ENCODE measurements at regions of chr6 and their contacts with region 1.

Region 1: DNA sequence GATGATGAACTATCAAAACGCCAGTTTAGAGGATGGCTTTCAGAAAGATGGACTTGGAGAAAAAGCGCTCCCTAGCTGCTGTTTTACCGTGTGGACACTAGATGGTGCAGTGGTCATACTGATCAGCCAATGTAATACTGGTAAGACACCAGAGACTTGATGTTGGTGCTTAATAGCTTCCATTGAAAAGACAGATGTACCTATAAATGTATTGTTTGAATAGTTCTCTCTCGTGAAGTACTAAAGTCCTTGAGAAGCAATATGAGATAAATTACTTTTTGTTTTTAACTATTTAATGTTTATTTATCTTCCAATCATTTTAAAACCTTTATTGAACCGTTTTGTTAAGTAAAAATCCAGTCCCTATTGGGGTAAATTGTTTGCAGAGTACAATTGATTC is 63.9 kb upstream of the FUCA2 start:
- DNase-seq: peak; percentile 51
- H3K4me3 Mint-ChIP-seq: no peak overlapping the region
- H3K27ac Mint-ChIP-seq: no peak overlapping the region
- H3K4me1 Mint-ChIP-seq: no peaks in the 10 kb centered on the region
- H3K27me3 Mint-ChIP-seq: no peaks in the 10 kb centered on the region
- CTCF ChIP-seq: peak; percentile 36

Region 2: DNA sequence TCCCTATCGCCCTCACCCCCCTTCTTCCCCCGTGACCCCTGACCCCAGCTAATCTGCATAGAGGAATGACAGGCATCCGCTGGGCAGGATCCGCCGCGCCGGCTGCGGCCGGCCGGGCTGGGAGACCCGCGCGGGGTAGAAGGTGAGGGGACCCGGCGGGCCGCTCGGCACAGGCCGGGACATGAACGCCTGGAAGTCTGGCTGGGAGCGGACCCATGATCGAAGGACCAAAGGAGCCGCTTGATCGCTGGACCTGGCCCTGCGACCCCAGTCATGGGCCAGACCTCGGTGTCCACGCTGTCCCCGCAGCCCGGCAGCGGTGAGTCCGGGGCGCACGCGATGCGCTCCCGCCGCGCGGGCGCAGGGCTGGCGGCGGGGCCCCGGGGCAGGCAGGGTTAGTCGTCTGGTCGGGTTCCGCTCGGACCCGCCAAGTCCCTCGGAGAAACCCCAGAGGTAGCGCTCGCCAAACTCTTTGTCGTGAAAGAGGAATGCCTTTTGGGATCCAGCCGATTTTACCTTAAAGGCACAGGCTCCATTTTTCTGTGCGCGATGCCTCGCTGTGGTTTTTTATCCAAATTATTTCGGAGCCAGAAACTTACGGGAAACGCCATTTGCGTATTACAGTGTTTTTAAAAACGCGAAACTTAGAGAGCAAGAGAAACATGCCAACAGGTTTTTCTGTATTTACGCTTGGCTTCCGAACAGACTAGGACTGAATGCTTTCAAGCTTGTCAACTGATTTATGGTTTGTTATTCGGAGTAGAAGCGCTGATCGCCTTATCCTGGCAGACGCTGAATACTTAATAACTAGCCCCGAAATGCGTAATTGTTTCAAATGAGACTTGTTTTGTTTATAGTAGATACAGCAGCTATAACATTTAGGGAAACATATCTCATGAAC is 102.7 kb after region 1 on chr6 and contains the start of gene PHACTR2:
- CTCF ChIA-PET with region 1: no interaction called
- intact Hi-C with region 1: loop called (anchors 5 kb)
- DNase-seq: peak; percentile 58
- H3K4me3 Mint-ChIP-seq: peak within 1 kb of the TSS; percentile 76
- H3K27ac Mint-ChIP-seq: peak within 1 kb of the TSS; percentile 75
- H3K4me1 Mint-ChIP-seq: peaks cover 28% of the 10 kb centered on the region
- H3K27me3 Mint-ChIP-seq: no peaks in the 10 kb centered on the region
- CTCF ChIP-seq: no peak
- total RNA-seq, gene PHACTR2: 19.5 and 20.7 TPM in 2 replicates

Region 3: DNA sequence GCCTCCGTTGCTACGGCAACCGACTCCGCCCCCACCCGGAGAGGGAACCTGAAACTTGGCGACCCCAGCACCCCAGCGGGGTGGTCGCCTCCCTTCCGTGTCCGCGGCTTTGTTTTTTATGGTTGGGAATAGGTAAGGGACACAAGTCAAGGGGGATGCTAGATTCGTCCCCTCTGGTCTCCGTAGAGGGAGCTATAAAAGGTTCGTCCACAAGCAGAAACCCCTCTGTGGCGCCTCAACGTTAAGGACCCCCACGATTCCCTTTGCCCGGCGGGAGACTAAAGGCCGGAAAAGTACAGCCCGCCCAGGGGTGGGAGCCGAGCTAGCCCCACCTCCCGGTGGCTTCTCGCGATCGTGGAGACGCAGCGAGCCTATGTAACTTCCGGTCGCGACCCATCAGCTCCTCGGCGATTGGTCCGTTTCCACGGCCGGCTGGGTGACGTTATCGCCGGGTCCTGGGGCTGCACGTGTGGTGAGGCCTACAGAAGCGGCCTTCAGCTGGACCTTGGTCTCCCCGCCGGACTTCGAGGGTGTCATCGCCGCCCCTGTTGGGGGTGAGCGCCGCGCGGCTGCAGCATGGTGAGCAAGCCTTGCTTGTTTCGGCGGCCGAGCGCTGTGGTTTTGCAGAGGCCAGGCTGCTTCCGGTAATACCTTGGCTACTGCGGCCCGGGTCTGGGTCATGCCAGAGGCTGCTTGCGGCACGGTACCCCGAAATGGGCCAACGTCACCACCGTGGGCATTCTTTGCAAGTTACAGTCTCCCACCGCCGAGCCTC is 267.6 kb after region 1 on chr6 and contains the start of gene LTV1:
- CTCF ChIA-PET with region 1: interaction called, 8 read pairs
- intact Hi-C with region 1: loop called (anchors 10 kb)
- DNase-seq: peak; percentile 92
- H3K4me3 Mint-ChIP-seq: peak within 1 kb of the TSS; percentile 82
- H3K27ac Mint-ChIP-seq: peak within 1 kb of the TSS; percentile 66
- H3K4me1 Mint-ChIP-seq: no peaks in the 10 kb centered on the region
- H3K27me3 Mint-ChIP-seq: no peaks in the 10 kb centered on the region
- CTCF ChIP-seq: no peak
- total RNA-seq, gene LTV1: 21.7 and 21.8 TPM in 2 replicates

Region 4: DNA sequence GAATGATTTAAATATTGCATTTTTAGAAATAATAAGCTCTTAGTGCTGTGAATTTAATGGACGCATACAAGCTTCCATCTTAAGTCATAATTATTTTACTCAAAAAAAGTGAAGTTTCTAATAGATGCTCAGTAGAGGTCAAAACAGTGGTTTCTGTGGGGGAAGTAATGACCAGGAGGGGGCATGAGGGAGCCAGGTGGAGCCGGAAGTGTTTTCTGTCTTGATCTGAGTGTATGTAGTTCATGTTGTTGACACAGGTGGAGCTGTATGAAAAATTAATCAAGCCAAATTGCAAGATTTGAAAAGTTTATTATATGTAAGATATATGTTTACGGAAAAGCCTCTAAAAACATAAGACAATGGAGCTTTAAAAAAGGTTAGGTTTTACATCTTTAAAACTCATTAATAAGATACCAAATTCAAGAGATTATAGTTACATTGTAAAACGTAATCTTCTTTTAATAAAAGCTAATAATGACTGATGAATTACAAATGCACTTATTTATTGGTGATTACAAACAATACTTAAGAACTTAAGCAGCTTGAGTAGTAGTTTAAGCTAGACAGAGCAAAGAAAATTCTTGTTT is 364.7 kb after region 1 on chr6:
- CTCF ChIA-PET with region 1: interaction called, 12 read pairs
- intact Hi-C with region 1: no loop called
- DNase-seq: peak; percentile 64
- H3K4me3 Mint-ChIP-seq: no peak overlapping the region
- H3K27ac Mint-ChIP-seq: no peak overlapping the region
- H3K4me1 Mint-ChIP-seq: no peaks in the 10 kb centered on the region
- H3K27me3 Mint-ChIP-seq: no peaks in the 10 kb centered on the region
- CTCF ChIP-seq: peak; percentile 31

Region 5: GRCh38 chr6:144013486-144013909 is 438.1 kb after region 1 on chr6:
- CTCF ChIA-PET with region 1: interaction called, 12 read pairs
- intact Hi-C with region 1: loop called (anchors 1 kb)
- DNase-seq: peak; percentile 65
- H3K4me3 Mint-ChIP-seq: no peak overlapping the region
- H3K27ac Mint-ChIP-seq: no peak overlapping the region
- H3K4me1 Mint-ChIP-seq: peaks cover 10% of the 10 kb centered on the region
- H3K27me3 Mint-ChIP-seq: no peaks in the 10 kb centered on the region
- CTCF ChIP-seq: peak; percentile 71

Measured in Calu3 (cell line).